Activated T-helper 1 cell treated with anti-CD3 and anti-CD28 coated beads, Interleukin-12 subunit alpha, Interleukin-12 subunit beta, Interleukin-2, Interleukin-4 antibody, amounts not matched to agents 30 ng/mL and 10 ng/mL and 1 ng/mL, durations not matched to agents 14 hours and 24 hours and 36 hours (primary cell): ENCODE measurements at regions of chr1 and their contacts with region 1.

Region 1: GRCh38 chr1:20640183-20640597 is 6.9 kb downstream of the PINK1 start:
- DNase-seq: peak; percentile 45
- H3K4me3 Mint-ChIP-seq: no peak overlapping the region
- H3K27ac Mint-ChIP-seq: no peak overlapping the region
- H3K4me1 Mint-ChIP-seq: no peaks in the 10 kb centered on the region
- H3K27me3 Mint-ChIP-seq: no peaks in the 10 kb centered on the region

Region 2: GRCh38 chr1:20521960-20522861 is 118.0 kb before region 1 on chr1:
- intact Hi-C with region 1: loop called (anchors 1 kb)
- DNase-seq: peak; percentile 35
- H3K4me3 Mint-ChIP-seq: no peak overlapping the region
- H3K27ac Mint-ChIP-seq: no peak overlapping the region
- H3K4me1 Mint-ChIP-seq: no peaks in the 10 kb centered on the region
- H3K27me3 Mint-ChIP-seq: peaks cover 3% of the 10 kb centered on the region

Region 3: GRCh38 chr1:20574686-20575540 is 65.3 kb before region 1 on chr1:
- intact Hi-C with region 1: loop called (anchors 1 kb)
- DNase-seq: peak; percentile 62
- H3K4me3 Mint-ChIP-seq: no peak overlapping the region
- H3K27ac Mint-ChIP-seq: no peak overlapping the region
- H3K4me1 Mint-ChIP-seq: peaks cover 6% of the 10 kb centered on the region
- H3K27me3 Mint-ChIP-seq: peaks cover 10% of the 10 kb centered on the region